CD8-positive, alpha-beta T cell (primary cell): ENCODE measurements at regions of chr4 and their contacts with region 1.

Region 1: DNA sequence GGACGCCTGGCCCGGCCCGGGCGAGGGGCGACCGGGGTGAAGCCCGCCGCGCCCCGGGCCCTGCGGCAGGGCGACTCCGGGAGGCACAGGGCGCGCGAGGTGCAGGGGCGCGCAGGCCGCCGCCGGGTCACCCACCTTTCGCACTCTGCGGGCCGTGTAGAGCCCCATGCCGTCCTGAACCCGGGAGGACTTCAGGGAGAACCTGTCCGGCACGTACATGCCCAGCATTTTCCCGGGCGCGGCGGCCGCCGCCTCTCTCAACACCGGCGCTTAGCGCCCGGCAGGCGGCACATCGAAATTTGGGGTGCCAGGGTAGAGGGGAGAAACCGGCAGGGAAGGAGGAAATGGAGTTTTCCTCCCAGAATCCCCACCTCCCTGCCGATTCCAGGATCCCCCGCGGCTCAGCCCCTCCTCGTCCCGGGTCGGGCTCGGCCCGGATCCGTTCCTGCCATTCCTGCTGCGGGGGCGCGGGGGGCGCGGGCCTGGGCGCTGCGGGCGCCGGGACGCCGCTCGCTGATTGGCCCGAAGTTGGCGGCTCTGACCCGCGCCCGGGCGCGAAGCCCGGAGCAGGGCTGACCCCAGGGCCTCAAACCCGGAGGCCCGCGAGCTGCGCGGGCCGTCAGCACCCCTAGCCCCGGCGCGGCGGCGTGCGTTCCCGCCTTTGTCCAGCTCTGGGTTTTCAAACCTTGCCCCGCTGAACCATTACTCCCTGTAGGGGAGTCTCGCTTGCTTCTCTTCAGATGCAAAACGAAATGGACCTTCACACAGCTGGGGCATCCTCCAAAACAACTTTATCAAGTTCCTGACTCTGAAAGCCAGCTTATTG is at the start of gene PRDM5:
- DNase-seq: peak in 8 of 9 experiments; percentile 3 to 67 (median 38)
- ATAC-seq: peak; percentile 53
- H3K4me3 ChIP-seq: peak within 1 kb of the TSS; percentile 61 to 86
- H3K4me3 Mint-ChIP-seq: peak within 1 kb of the TSS; percentile 89
- H3K27ac ChIP-seq: peak within 1 kb of the TSS; percentile 24 to 33
- H3K27ac Mint-ChIP-seq: peak within 1 kb of the TSS; percentile 70
- H3K4me1 ChIP-seq: peaks cover 8% of the 10 kb centered on the region
- H3K4me1 Mint-ChIP-seq: peaks cover 17% of the 10 kb centered on the region
- H3K27me3 ChIP-seq: no peaks in the 10 kb centered on the region
- H3K27me3 Mint-ChIP-seq: no peaks in the 10 kb centered on the region
- CTCF ChIP-seq: no peak
- total RNA-seq, gene PRDM5: 0.92 to 1.1 TPM

Region 2: DNA sequence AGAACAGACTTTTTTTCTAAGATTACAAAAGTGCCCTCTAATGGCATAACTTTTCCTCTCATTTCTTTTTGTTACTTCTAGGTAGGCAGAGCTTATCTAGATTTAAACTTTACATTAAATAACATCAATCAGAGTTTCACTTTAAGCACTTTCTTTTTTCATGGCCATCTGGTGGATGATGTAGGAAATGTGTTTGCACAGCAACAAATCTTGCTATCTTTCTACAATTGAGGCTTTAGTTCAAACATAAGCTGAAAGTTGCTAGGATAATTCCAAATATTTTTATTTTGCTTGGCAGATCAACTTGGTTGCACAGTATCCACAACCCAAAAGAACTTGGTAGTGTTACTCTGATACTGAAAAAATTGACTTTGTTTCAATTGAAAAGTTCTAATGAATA is 127.7 kb after region 1 on chr4:
- CTCF ChIA-PET with region 1: interaction called, 8 read pairs
- POLR2A ChIA-PET with region 1: no interaction called
- intact Hi-C with region 1: loop called (anchors 2 to 5 kb)
- DNase-seq: peak in 2 of 9 experiments; percentile 28 to 50
- ATAC-seq: no peak
- H3K4me3 ChIP-seq: no peak overlapping the region
- H3K4me3 Mint-ChIP-seq: no peak overlapping the region
- H3K27ac ChIP-seq: no peak overlapping the region
- H3K27ac Mint-ChIP-seq: no peak overlapping the region
- H3K4me1 ChIP-seq: no peaks in the 10 kb centered on the region
- H3K4me1 Mint-ChIP-seq: peaks cover 8% of the 10 kb centered on the region
- H3K27me3 ChIP-seq: no peaks in the 10 kb centered on the region
- H3K27me3 Mint-ChIP-seq: peaks cover 2% of the 10 kb centered on the region
- CTCF ChIP-seq: peak; percentile 42

Region 3: DNA sequence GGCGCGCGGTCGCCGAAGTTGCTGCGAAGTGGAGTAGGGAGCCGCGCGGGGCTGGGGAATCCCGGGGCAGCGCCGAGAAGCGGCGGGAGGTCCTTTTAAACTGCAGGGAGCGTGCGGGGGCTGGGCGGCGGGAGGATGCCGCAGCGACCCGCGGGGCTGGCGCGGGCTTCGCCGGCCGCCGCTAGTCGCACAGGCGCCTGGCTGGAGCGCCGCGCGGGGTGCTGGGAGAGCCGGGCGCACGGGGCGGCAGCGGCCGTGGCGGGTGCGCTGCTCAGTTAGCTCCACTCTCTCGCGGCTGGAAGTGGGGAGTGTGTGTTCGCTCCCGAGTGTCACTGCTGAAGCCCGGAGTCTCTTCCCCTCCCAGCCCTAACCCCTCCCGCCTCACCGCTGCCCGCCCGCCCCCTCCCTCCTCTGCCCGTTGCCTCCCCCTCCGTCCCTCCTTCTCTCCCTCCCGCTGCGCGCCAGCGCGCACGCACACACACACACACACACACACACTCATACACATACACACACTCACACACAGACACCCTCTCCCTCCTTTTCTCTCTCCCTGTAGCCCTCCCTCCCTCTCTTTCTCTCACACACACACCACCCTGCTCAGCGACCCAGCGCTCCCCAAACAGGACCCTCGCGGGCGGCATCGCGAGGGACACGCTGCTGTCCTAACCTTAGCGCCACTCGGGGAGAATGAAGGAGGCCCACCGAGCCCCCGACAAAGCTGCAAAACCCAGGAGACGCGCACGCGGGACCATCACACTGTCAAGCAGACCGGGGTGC is 149.8 kb after region 1 on chr4 and contains the start of gene NDNF:
- CTCF ChIA-PET with region 1: interaction called, 3 read pairs
- POLR2A ChIA-PET with region 1: no interaction called
- intact Hi-C with region 1: loop called in 1 of 2 experiments (anchors 5 kb)
- DNase-seq: peak in 6 of 9 experiments; percentile 18 to 70 (median 44)
- ATAC-seq: peak; percentile 55
- H3K4me3 ChIP-seq: peak within 1 kb of the TSS; percentile 50 to 60
- H3K4me3 Mint-ChIP-seq: peak within 1 kb of the TSS; percentile 87
- H3K27ac ChIP-seq: no peak within 1 kb of the TSS
- H3K27ac Mint-ChIP-seq: no peak within 1 kb of the TSS
- H3K4me1 ChIP-seq: peaks cover 7% of the 10 kb centered on the region
- H3K4me1 Mint-ChIP-seq: peaks cover 20% of the 10 kb centered on the region
- H3K27me3 ChIP-seq: peaks cover 17 to 25% of the 10 kb centered on the region in 2 experiments
- H3K27me3 Mint-ChIP-seq: peaks cover 50% of the 10 kb centered on the region
- CTCF ChIP-seq: no peak
- total RNA-seq, gene NDNF: not detected

Region 4: GRCh38 chr4:121564840-121565375 is 642.3 kb after region 1 on chr4:
- CTCF ChIA-PET with region 1: no interaction called
- POLR2A ChIA-PET with region 1: no interaction called
- intact Hi-C with region 1: no loop called
- DNase-seq: no peak
- ATAC-seq: no peak
- H3K4me3 ChIP-seq: no peak overlapping the region
- H3K4me3 Mint-ChIP-seq: no peak overlapping the region
- H3K27ac ChIP-seq: no peak overlapping the region
- H3K27ac Mint-ChIP-seq: no peak overlapping the region
- H3K4me1 ChIP-seq: no peaks in the 10 kb centered on the region
- H3K4me1 Mint-ChIP-seq: no peaks in the 10 kb centered on the region
- H3K27me3 ChIP-seq: no peaks in the 10 kb centered on the region
- H3K27me3 Mint-ChIP-seq: peaks cover 16% of the 10 kb centered on the region
- CTCF ChIP-seq: no peak